GM12878 (cell line): ENCODE measurements at regions of chr5 and their contacts with region 1.

Region 1: DNA sequence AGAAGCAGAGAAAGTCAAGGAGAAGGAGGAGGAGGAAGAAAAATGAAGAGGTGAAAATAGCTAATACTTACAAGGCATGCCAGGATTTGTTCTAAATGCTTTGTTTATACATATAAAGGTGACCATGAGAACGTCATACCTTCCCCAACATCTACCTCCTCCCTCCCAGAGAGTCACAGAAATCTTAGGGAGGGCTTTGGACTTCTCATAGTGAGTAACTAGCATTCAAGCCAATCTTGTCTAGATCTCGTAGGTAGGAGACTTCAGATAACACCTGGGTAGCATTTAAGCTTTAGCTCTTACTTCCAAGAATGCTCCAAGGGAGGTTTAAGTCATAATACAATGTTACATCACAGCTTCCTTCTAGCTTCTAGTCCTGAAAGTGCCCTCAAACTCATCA is 36.5 kb upstream of the GPBP1 start:
- DNase-seq: no peak
- ATAC-seq: no peak
- H3K4me3 ChIP-seq: no peak overlapping the region
- H3K27ac ChIP-seq: no peak overlapping the region
- H3K4me1 ChIP-seq: no peaks in the 10 kb centered on the region
- H3K27me3 ChIP-seq: no peaks in the 10 kb centered on the region; a peak in 1 of 4 replicates
- CTCF ChIP-seq: no peak
- EP300 ChIP-seq: no peak
- POLR2A ChIP-seq: no peak
- RAD21 ChIP-seq: no peak

Region 2: GRCh38 chr5:56893251-56893951 is 244.0 kb before region 1 on chr5:
- CTCF ChIA-PET with region 1: interaction called, 12 read pairs
- POLR2A ChIA-PET with region 1: no interaction called
- RAD21 ChIA-PET with region 1: no interaction called
- SMC1A ChIA-PET with region 1: interaction called, 14 read pairs
- in situ Hi-C with region 1: no loop called
- intact Hi-C with region 1: no loop called
- DNase-seq: no peak
- ATAC-seq: no peak
- H3K4me3 ChIP-seq: no peak overlapping the region
- H3K27ac ChIP-seq: no peak overlapping the region
- H3K4me1 ChIP-seq: no peaks in the 10 kb centered on the region
- H3K27me3 ChIP-seq: no peaks in the 10 kb centered on the region
- CTCF ChIP-seq: no peak
- EP300 ChIP-seq: no peak
- POLR2A ChIP-seq: no peak
- RAD21 ChIP-seq: no peak

Region 3: DNA sequence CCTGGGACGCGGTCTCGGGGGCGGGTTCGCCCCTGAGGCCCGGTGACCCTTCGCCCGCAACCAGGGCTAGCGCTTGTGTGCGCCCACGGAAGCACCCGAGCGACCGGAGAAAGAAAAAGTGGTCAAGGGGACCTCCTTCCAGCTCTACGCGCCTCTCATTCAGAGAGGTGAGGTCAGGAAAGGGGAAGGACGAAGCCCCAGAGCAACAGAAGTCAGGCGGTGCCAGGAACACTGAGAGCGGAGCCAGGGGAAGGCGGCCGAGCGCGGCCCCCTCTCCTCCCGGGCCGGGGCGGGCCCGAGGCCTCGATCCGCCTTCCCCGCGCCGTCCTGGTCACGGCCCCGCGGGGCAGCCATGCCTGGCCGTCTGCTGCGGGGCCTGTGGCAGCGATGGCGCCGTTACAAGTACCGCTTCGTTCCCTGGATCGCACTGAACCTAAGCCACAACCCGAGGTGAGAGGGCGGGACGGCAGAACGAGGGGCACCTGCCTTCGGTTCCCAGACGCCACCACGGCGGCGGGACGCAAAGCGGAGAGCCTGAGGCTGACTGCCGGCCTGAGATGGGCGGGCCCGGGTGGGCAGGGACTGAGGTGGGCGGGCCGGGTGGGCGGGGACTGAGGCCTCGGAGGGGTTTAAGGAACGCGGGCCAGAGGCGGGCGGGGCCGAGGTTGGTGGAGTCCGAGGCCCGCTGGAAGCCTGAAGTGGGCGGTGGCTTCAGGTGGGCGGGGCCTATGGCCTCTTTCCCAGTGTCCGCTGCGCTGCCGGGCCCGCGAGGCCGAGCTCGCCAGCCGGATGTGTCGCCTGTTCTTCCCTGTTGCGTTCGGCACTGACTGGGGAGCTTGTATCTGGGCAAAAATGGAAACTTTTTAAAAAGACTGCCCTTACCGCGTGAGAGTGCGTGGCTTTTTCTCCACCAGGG is 227.8 kb before region 1 on chr5 and contains the start of gene SETD9:
- CTCF ChIA-PET with region 1: interaction called, 17 read pairs
- POLR2A ChIA-PET with region 1: no interaction called
- RAD21 ChIA-PET with region 1: interaction called, 63 read pairs
- SMC1A ChIA-PET with region 1: interaction called, 45 read pairs
- in situ Hi-C with region 1: loop called (anchors 5 kb)
- intact Hi-C with region 1: no loop called
- DNase-seq: peak; percentile 86
- ATAC-seq: peak; percentile 90
- H3K4me3 ChIP-seq: peak within 1 kb of the TSS; percentile 79
- H3K27ac ChIP-seq: peak within 1 kb of the TSS; percentile 91
- H3K4me1 ChIP-seq: peaks cover 7% of the 10 kb centered on the region
- H3K27me3 ChIP-seq: no peaks in the 10 kb centered on the region
- CTCF ChIP-seq: no peak
- EP300 ChIP-seq: no peak
- POLR2A ChIP-seq: peak; percentile 98
- RAD21 ChIP-seq: no peak
- polyA plus RNA-seq, gene SETD9: 12.9 to 17.1 TPM

Region 4: GRCh38 chr5:56995596-56995995 is 141.8 kb before region 1 on chr5:
- CTCF ChIA-PET with region 1: no interaction called
- POLR2A ChIA-PET with region 1: no interaction called
- RAD21 ChIA-PET with region 1: no interaction called
- SMC1A ChIA-PET with region 1: interaction called, 3 read pairs
- in situ Hi-C with region 1: no loop called
- intact Hi-C with region 1: loop called (anchors 5 kb)
- DNase-seq: no peak
- ATAC-seq: no peak
- H3K4me3 ChIP-seq: no peak overlapping the region
- H3K27ac ChIP-seq: no peak overlapping the region
- H3K4me1 ChIP-seq: no peaks in the 10 kb centered on the region
- H3K27me3 ChIP-seq: no peaks in the 10 kb centered on the region; a peak in 2 of 4 replicates
- CTCF ChIP-seq: no peak
- EP300 ChIP-seq: no peak
- POLR2A ChIP-seq: no peak
- RAD21 ChIP-seq: no peak

Region 5: GRCh38 chr5:57209351-57210040 is 72.1 kb after region 1 on chr5:
- CTCF ChIA-PET with region 1: interaction called, 10 read pairs
- POLR2A ChIA-PET with region 1: no interaction called
- RAD21 ChIA-PET with region 1: no interaction called
- SMC1A ChIA-PET with region 1: no interaction called
- in situ Hi-C with region 1: no loop called
- intact Hi-C with region 1: no loop called
- DNase-seq: no peak
- ATAC-seq: peak; percentile 17; the same call in 1 of the 3 replicates
- H3K4me3 ChIP-seq: 0 out of 2 replicates have a peak overlapping the region, but pooled peaks have one; percentile 14
- H3K27ac ChIP-seq: no peak overlapping the region
- H3K4me1 ChIP-seq: peaks cover 3% of the 10 kb centered on the region; the same call in 1 of the 2 replicates
- H3K27me3 ChIP-seq: no peaks in the 10 kb centered on the region
- CTCF ChIP-seq: no peak
- EP300 ChIP-seq: no peak
- POLR2A ChIP-seq: no peak
- RAD21 ChIP-seq: no peak

Region 6: GRCh38 chr5:57513785-57514184 is 376.4 kb after region 1 on chr5:
- CTCF ChIA-PET with region 1: no interaction called
- POLR2A ChIA-PET with region 1: no interaction called
- RAD21 ChIA-PET with region 1: no interaction called
- SMC1A ChIA-PET with region 1: no interaction called
- in situ Hi-C with region 1: no loop called
- intact Hi-C with region 1: no loop called
- DNase-seq: no peak
- ATAC-seq: peak; percentile 52; the same call in 2 of the 3 replicates
- H3K4me3 ChIP-seq: no peak overlapping the region
- H3K27ac ChIP-seq: no peak overlapping the region
- H3K4me1 ChIP-seq: no peaks in the 10 kb centered on the region
- H3K27me3 ChIP-seq: no peaks in the 10 kb centered on the region
- CTCF ChIP-seq: no peak
- EP300 ChIP-seq: no peak
- POLR2A ChIP-seq: no peak
- RAD21 ChIP-seq: no peak